ENCODE measurements at regions of chr11 and their contacts with region 1.

Region 1: GRCh38 chr11:60193687-60194433 is 11.0 kb upstream of the MS4A6A start:
- DNase-seq: peak; percentile 58
- ATAC-seq: peak; percentile 88
- H3K4me3 ChIP-seq: no peak overlapping the region
- H3K4me3 Mint-ChIP-seq: peak overlapping the region; percentile 0
- H3K27ac ChIP-seq: no peak overlapping the region
- H3K27ac Mint-ChIP-seq: peak overlapping the region; percentile 23
- H3K4me1 ChIP-seq: peaks cover 10 to 18% of the 10 kb centered on the region in 2 donors
- H3K4me1 Mint-ChIP-seq: peaks cover 17% of the 10 kb centered on the region
- H3K27me3 ChIP-seq: peaks cover 0 to 4% (median 0%) of the 10 kb centered on the region in 4 experiments
- H3K27me3 Mint-ChIP-seq: no peaks in the 10 kb centered on the region
- CTCF ChIP-seq: peak; percentile 73

Region 2: DNA sequence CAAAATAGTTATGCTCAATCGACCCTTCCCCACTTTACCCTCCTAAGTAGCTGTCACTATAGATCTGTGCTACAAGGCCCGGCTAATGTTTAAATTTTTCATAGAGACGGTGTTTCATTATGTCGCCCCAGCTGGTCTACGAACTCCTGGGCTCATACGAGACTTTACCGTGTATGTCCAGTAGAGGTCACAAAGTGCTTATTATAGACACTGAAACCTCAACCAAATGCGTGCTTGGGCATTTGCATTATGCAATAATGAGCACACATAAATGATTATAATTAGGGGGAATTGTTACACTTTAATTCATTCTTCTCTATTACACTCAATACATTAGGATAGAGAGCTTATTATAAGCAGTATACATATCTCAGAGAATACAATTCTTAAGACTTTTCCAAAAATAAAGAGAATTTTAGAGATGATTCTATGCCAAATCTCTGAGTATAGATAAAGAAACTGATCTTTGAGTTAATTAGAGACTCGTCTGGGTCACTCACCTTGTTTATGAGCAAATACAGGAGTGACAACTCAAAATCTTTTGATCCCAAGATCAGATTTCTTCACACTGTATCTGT is 370.8 kb before region 1 on chr11:
- CTCF ChIA-PET with region 1: no interaction called
- POLR2A ChIA-PET with region 1: no interaction called
- intact Hi-C with region 1: loop called (anchors 10 kb)
- DNase-seq: peak; percentile 60
- ATAC-seq: peak; percentile 67
- H3K4me3 ChIP-seq: no peak overlapping the region
- H3K4me3 Mint-ChIP-seq: no peak overlapping the region
- H3K27ac ChIP-seq: no peak overlapping the region
- H3K27ac Mint-ChIP-seq: no peak overlapping the region
- H3K4me1 ChIP-seq: peaks cover 6 to 7% of the 10 kb centered on the region in 2 donors
- H3K4me1 Mint-ChIP-seq: peaks cover 11% of the 10 kb centered on the region
- H3K27me3 ChIP-seq: no peaks in the 10 kb centered on the region
- H3K27me3 Mint-ChIP-seq: peaks cover 3% of the 10 kb centered on the region
- CTCF ChIP-seq: peak; percentile 66

Region 3: DNA sequence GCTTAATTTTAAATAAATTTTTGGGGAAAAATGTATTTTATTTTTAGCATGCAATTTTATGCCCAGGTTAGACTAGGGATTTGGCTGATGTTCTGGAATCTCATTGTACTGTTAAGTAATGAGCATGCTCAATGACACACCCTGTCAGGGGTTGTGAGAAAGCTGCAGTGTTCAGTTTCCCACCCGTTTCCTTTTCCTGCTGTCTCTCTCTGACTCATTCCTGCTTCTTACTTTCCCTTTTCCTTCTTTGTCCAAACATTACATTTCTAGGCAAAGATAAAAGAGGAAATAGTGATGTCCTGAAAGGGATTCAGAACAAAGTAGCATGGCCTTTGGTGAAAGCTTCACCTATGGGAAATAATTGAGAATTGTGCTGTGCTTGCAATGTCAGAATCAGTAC is 292.6 kb before region 1 on chr11:
- CTCF ChIA-PET with region 1: no interaction called
- POLR2A ChIA-PET with region 1: no interaction called
- intact Hi-C with region 1: no loop called
- DNase-seq: no peak
- ATAC-seq: no peak
- H3K4me3 ChIP-seq: no peak overlapping the region
- H3K4me3 Mint-ChIP-seq: no peak overlapping the region
- H3K27ac ChIP-seq: no peak overlapping the region
- H3K27ac Mint-ChIP-seq: no peak overlapping the region
- H3K4me1 ChIP-seq: no peaks in the 10 kb centered on the region
- H3K4me1 Mint-ChIP-seq: no peaks in the 10 kb centered on the region
- H3K27me3 ChIP-seq: no peaks in the 10 kb centered on the region
- H3K27me3 Mint-ChIP-seq: peaks cover 7% of the 10 kb centered on the region
- CTCF ChIP-seq: no peak